ENCODE measurements at regions of chr2 and their contacts with region 1.

Region 1: DNA sequence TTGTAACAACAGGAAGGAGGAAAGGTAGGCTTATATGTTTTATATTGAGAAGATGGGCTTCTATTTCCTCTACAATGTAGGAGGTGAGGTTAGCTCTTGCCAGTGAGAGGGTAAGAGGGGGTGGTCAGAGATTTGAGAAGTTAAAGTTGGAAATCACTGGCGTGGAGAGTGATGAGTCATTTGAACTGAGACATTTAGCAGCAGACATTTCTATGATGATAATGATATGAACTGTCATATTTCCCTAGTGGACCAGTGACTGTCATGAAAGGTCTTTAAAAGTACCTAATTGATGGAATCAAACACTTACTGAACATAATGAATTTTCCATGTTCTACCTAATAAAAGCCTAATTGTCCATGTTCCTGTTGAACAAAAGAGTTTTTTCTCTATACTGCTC is 126.1 kb downstream of the FAM161A start:
- DNase-seq: no peak
- ATAC-seq: no peak
- H3K4me3 ChIP-seq: no peak overlapping the region
- H3K4me3 Mint-ChIP-seq: no peak overlapping the region
- H3K27ac ChIP-seq: no peak overlapping the region
- H3K27ac Mint-ChIP-seq: no peak overlapping the region
- H3K4me1 ChIP-seq: no peaks in the 10 kb centered on the region
- H3K4me1 Mint-ChIP-seq: no peaks in the 10 kb centered on the region
- H3K27me3 ChIP-seq: peaks cover 3% of the 10 kb centered on the region
- H3K27me3 Mint-ChIP-seq: peaks cover 11 to 14% of the 10 kb centered on the region in 2 donors
- CTCF ChIP-seq: no peak

Region 2: DNA sequence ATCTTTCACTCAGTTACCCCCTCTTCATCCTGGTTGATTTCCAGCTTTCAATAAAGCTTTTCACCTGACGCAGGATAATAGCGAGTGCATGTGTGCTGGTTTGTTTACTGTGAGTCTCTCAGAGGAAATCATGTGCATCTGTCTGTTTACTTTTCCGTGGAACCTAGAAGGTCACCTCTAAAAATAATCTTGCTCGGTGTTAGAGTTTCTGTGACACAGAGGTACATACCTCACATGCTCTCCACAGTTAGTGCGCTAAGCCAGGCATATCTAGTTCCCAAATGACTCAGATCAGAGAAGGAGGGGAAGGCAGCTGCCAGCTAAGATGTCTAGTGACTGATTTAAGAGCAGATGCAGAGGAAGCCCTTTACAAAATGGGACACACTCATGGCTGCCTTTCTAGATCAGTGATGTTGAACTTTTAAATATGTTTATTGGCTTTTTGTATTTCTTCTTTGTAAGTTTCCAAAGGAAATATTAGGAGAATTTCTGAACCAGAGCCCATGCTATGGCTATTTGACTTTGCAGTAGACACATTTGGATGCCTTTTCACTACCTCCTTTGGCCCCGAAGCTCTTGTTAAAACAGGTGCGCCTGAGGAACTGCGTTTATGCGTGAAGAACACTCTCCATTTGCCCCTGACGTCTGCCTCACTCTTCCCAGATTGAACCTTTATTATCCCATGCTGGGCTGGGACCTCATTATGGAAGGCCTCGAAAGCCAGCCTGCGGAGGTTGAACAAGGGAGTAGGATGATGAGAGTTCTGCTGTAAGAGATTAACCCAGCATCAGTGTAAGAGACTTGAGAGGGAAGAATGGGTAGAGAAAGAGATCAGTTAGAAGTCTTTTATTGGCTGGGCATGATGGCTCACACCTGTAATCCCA is 19.5 kb before region 1 on chr2:
- intact Hi-C with region 1: loop called (anchors 1 kb)
- DNase-seq: no peak
- ATAC-seq: no peak
- H3K4me3 ChIP-seq: no peak overlapping the region
- H3K4me3 Mint-ChIP-seq: no peak overlapping the region
- H3K27ac ChIP-seq: no peak overlapping the region
- H3K27ac Mint-ChIP-seq: no peak overlapping the region
- H3K4me1 ChIP-seq: no peaks in the 10 kb centered on the region
- H3K4me1 Mint-ChIP-seq: no peaks in the 10 kb centered on the region
- H3K27me3 ChIP-seq: no peaks in the 10 kb centered on the region
- H3K27me3 Mint-ChIP-seq: peaks cover 0 to 3% of the 10 kb centered on the region in 2 donors
- CTCF ChIP-seq: no peak